Activated CD8-positive, alpha-beta T cell treated with anti-CD3 and anti-CD28 coated beads for 36 hours (primary cell): ENCODE measurements at regions of chr3 and their contacts with region 1.

Region 1: DNA sequence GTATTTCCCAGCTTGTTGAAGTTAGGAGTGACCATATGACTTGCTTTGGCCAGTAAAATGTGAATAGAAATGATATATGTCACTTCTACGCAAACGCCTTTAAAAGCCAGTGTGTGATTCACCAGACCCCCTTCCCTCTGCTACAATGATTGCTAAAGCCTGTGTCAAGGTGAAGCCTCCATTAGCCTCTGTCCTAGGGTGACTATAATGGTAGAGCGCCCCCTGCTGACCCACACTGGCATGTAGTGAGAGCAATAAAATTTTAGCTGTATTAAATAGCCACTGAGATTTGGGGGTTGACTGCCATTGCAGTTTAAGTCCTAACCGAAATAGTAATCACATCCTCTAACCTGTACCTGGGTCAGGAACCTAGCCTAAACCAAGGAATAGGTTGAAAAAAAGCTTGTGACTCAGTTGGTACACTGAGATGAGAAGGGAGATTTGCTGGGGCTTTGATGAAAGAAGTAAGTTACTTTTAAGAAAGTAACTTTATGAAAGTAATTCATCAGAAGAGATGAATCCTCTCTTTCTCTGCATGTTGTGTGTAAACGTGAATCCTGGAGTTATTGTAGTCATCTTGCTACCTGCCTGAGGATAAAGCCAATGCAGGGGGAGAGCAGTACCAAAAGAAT is 52.6 kb downstream of the GTF2E1 start:
- DNase-seq: peak; percentile 94
- ATAC-seq: peak; percentile 98
- H3K4me3 Mint-ChIP-seq: no peak overlapping the region
- H3K27ac Mint-ChIP-seq: no peak overlapping the region
- H3K4me1 Mint-ChIP-seq: peaks cover 8% of the 10 kb centered on the region
- H3K27me3 Mint-ChIP-seq: no peaks in the 10 kb centered on the region
- CTCF ChIP-seq: peak; percentile 76

Region 2: DNA sequence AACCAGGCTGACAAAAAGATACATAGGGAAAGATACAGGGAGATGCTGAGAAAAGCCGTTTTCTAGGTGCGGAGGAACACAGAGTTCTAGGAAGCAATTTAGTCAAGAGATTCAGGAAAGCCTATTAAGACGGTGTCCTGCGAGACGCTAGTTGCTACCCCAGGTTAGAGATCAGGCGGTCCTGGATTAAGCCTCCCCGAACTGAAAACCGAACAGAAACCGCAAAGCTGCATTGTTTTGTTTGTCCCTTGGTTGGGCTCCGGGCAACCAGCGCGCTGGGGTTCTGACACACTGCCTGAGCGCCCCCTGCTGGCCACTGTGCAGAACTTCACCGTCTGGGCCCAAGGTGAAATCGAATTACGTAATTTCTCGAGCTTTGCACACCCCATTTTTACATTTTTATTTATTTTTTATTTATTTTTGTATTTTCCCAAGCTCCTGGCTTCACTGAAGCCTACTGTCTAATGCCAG is 236.3 kb before region 1 on chr3:
- CTCF ChIA-PET with region 1: interaction called, 68 read pairs
- POLR2A ChIA-PET with region 1: no interaction called
- intact Hi-C with region 1: loop called (anchors 1 kb)
- DNase-seq: peak; percentile 88
- ATAC-seq: peak; percentile 84
- H3K4me3 Mint-ChIP-seq: peak overlapping the region; percentile 73
- H3K27ac Mint-ChIP-seq: peak overlapping the region; percentile 39
- H3K4me1 Mint-ChIP-seq: peaks cover 15% of the 10 kb centered on the region
- H3K27me3 Mint-ChIP-seq: peaks cover 12% of the 10 kb centered on the region
- CTCF ChIP-seq: peak; percentile 94

Region 3: DNA sequence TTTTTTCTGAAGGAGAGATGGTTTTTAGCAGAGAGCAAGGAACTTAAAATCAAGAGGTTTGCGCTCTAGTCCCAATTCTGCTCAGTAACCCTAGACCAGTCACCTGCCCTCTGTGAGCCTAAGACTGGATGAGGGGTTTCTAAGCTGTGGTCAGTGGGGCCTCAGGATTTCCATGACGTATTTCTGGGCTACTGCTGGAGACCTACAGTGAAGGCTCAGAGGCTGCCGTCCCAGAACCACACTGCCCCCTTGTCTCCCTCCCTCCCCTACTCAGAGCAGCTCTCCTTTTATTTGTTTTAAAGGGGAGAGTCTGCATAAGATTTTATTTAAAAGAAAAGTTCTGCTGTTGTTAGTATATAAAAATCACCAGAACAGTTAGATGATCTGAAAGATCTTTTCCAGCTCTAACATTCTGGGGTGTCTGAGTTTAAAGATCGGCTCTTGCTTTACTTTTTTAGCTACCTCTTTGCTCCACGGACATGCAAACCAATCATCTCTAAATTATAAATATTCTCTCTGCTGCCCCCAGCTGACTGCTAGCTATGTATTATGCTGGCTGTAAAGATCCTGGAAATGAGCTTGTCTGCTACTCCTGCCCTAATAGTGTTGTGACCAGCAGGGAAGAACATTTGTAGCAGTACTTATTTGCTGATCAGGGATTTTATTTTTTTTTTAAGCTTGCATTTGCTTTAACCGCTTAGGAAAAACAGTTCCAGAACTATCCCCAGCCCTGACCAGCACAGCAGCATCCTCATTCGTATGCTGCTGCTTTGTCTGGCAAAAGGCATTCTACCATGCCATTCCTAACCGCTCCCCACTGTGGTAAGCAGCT is 227.5 kb before region 1 on chr3:
- CTCF ChIA-PET with region 1: interaction called, 28 read pairs
- POLR2A ChIA-PET with region 1: no interaction called
- intact Hi-C with region 1: no loop called
- DNase-seq: peak; percentile 15
- ATAC-seq: peak; percentile 53
- H3K4me3 Mint-ChIP-seq: peak overlapping the region; percentile 5
- H3K27ac Mint-ChIP-seq: no peak overlapping the region
- H3K4me1 Mint-ChIP-seq: no peaks in the 10 kb centered on the region
- H3K27me3 Mint-ChIP-seq: peaks cover 2% of the 10 kb centered on the region
- CTCF ChIP-seq: peak; percentile 22

Region 4: DNA sequence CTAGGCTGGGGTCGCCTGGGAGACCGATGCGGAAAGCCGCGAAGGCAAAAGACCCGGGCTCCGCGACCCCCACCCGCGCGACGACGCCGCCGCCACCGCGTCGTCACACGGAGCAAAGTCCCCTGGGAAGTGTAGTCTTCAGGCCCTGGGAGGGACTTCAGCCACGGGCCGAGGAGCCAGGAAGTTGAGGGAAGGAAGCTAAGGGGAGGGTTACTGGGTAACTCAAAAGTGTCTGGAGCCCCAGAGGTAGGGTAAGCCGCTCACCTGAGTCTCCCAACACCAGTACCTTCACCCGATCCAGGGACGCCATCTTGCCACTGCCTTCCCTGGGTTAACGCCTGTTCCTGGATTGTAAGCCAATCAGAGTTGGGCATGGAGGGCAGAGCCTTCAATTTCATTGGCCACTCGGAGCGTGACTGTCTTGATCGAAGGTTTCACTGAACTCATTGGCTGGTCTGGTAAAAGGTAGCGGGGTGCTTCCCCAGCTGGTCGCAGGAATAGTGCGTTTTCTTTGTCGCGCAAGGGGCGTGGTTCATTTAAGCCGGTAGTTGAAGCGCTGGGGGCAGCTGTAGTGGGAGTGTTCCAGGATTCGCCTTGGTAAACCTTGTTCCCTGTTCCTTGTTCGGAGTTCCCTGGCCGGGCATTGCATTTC is 52.8 kb before region 1 on chr3 and contains the starts of genes GTF2E1 and RABL3:
- CTCF ChIA-PET with region 1: interaction called, 10 read pairs
- POLR2A ChIA-PET with region 1: no interaction called
- intact Hi-C with region 1: no loop called
- DNase-seq: peak; percentile 98
- ATAC-seq: peak; percentile 98
- H3K4me3 Mint-ChIP-seq: peak within 1 kb of the TSS; percentile 84
- H3K27ac Mint-ChIP-seq: peak within 1 kb of the TSS; percentile 96
- H3K4me1 Mint-ChIP-seq: peaks cover 27% of the 10 kb centered on the region
- H3K27me3 Mint-ChIP-seq: no peaks in the 10 kb centered on the region
- CTCF ChIP-seq: no peak
- total RNA-seq, gene GTF2E1: 25.2 to 25.9 TPM
- total RNA-seq, gene RABL3: 28.8 to 37.1 TPM

Region 5: DNA sequence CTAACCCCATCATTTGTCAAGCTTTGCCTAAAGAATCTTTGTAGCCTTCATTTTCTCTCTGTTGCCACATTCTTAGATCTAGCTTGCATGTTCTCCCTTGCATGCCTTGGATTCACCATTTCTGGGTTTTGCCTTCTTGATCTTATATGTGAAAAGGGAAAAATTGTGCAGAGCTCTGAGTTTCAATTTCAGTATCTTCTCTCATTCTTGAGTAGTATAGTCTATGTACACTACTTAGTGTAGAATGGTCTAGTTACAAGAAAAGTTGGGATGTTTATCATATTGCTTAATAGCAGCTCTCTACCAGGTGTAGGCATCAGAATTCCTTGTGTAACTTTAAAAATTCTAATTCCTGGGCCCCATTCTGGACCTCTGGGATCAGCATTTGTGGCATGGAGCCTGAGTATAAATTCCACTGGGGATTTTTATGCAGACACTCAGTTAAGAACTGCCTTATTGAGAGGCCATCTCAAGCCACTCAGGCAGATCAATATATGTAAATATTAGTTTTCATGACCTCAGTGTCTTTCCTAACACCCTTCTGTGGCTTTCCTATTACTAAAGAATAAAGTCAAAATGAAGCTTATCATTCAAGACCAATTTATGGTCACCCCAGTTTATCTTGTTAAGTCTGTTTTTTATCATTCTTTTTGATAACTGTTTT is 29.2 kb before region 1 on chr3:
- CTCF ChIA-PET with region 1: interaction called, 14 read pairs
- POLR2A ChIA-PET with region 1: no interaction called
- intact Hi-C with region 1: no loop called
- DNase-seq: no peak
- ATAC-seq: no peak
- H3K4me3 Mint-ChIP-seq: no peak overlapping the region
- H3K27ac Mint-ChIP-seq: no peak overlapping the region
- H3K4me1 Mint-ChIP-seq: peaks cover 47% of the 10 kb centered on the region
- H3K27me3 Mint-ChIP-seq: no peaks in the 10 kb centered on the region
- CTCF ChIP-seq: no peak

Region 6: DNA sequence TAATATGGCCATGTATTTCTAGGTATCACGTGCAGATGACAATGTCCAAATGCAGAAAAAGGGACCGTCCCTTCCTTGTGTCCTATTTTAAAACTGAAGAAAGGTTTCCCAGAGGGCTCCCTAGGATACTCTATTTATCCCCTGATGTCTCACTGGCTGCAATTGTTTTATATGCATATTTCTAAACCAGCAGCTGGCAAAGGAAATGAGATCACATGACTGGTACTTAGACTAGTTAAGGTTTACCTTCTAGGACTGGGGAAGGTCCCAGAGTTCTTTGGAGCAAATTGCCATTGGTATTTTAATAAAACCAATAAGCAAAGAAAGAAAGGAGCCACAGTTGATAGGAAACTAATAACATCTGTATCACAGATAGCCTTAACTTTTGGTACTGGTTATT is 23.1 kb before region 1 on chr3:
- CTCF ChIA-PET with region 1: interaction called, 11 read pairs
- POLR2A ChIA-PET with region 1: no interaction called
- intact Hi-C with region 1: no loop called
- DNase-seq: no peak
- ATAC-seq: no peak
- H3K4me3 Mint-ChIP-seq: no peak overlapping the region
- H3K27ac Mint-ChIP-seq: no peak overlapping the region
- H3K4me1 Mint-ChIP-seq: peaks cover 12% of the 10 kb centered on the region
- H3K27me3 Mint-ChIP-seq: no peaks in the 10 kb centered on the region
- CTCF ChIP-seq: no peak

Region 7: GRCh38 chr3:120816728-120817127 is 21.6 kb after region 1 on chr3:
- CTCF ChIA-PET with region 1: interaction called, 12 read pairs
- POLR2A ChIA-PET with region 1: no interaction called
- intact Hi-C with region 1: no loop called
- DNase-seq: no peak
- ATAC-seq: no peak
- H3K4me3 Mint-ChIP-seq: no peak overlapping the region
- H3K27ac Mint-ChIP-seq: no peak overlapping the region
- H3K4me1 Mint-ChIP-seq: no peaks in the 10 kb centered on the region
- H3K27me3 Mint-ChIP-seq: peaks cover 10% of the 10 kb centered on the region
- CTCF ChIP-seq: no peak

Region 8: DNA sequence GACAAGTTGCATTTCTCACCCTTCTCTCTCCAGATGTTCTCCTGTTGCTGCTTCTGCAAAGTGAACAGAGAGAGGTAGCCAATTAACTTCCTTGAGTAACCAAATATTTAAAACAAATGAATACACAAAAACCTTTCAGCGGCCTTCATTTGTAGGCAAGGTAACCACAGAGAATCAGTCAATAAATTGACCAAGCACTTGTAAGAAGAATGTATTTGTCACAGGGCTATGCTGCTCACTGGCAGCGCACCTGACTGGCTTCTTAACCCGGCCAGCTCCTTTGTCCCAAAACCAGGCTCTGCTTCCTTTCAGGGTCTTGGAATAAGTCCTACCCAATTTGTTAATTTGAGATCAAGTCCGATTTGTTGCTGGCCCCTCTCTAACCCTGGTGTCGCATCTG is 69.4 kb after region 1 on chr3:
- CTCF ChIA-PET with region 1: no interaction called
- POLR2A ChIA-PET with region 1: no interaction called
- intact Hi-C with region 1: no loop called
- DNase-seq: no peak
- ATAC-seq: no peak
- H3K4me3 Mint-ChIP-seq: no peak overlapping the region
- H3K27ac Mint-ChIP-seq: no peak overlapping the region
- H3K4me1 Mint-ChIP-seq: no peaks in the 10 kb centered on the region
- H3K27me3 Mint-ChIP-seq: peaks cover 10% of the 10 kb centered on the region
- CTCF ChIP-seq: no peak